Naive thymus-derived CD8-positive, alpha-beta T cell (primary cell): ENCODE measurements at regions of chr16 and their contacts with region 1.

Region 1: DNA sequence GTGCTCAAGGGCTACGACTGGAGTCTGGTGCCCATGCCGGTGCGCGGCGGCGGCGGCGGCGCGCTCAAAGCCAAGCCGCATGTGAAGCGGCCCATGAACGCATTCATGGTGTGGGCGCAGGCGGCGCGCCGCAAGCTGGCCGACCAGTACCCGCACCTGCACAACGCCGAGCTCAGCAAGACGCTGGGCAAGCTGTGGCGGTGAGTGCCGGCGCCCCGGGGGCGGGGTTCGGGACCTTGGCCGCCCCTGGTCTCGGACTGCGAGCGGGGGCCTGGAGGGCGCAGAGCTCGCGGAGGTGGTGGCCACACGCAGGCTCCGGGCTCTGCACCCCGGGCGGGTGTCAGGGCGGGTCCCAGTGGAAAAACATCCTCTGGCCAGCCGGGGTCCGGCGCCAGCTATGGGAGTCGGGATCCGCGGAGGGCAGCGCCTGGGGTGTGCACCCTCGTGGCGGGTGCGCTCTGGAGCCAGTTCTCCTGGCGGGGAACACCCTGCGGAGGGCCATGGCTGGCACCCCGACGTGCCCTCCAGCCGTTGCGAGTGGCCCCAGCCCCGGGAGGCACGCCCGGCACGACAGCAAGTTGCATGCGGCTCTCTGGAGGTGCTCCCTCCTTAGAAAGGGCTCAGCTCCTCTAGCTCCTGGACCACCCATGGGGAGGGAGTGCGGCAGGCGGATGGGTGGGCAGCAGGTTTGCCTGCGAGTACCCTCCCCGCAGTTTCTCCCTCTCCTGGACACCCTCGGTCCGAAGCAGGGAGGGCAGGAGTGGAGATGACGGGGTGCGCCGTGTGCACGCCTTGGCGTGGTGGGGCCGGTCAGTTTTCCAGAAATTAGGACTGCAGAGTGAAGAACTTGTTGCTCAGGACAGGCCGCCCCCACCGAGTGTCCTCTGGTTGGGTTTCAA is 824 bp downstream of the SOX8 start:
- DNase-seq: peak in 1 of 10 donors; percentile 34
- ATAC-seq: peak; percentile 40 to 45
- H3K4me3 Mint-ChIP-seq: peak overlapping the region; percentile 58 to 74 (median 68)
- H3K27ac Mint-ChIP-seq: peak overlapping the region in 1 of 10 donors; percentile 33
- H3K4me1 Mint-ChIP-seq: peaks cover 2 to 25% (median 14%) of the 10 kb centered on the region in 4 donors
- H3K27me3 Mint-ChIP-seq: peaks cover 0 to 6% (median 0%) of the 10 kb centered on the region in 5 donors

Region 2: GRCh38 chr16:970766-971581 is 11.4 kb before region 1 on chr16 and contains the start of gene LMF1:
- POLR2A ChIA-PET with region 1: interaction called, 30 read pairs
- DNase-seq: peak; percentile 88 to 100 (median 97)
- ATAC-seq: peak; percentile 90 to 92
- H3K4me3 Mint-ChIP-seq: peak within 1 kb of the TSS; percentile 68 to 89 (median 78)
- H3K27ac Mint-ChIP-seq: peak within 1 kb of the TSS in 9 of 10 donors; percentile 44 to 89 (median 75)
- H3K4me1 Mint-ChIP-seq: peaks cover 12 to 34% (median 18%) of the 10 kb centered on the region in 4 donors
- H3K27me3 Mint-ChIP-seq: no peaks in the 10 kb centered on the region
- polyA plus RNA-seq, gene LMF1: 12.2 to 13.6 (median 12.9) TPM

Region 3: GRCh38 chr16:1002399-1003161 is 20.2 kb after region 1 on chr16:
- POLR2A ChIA-PET with region 1: interaction called, 171 read pairs
- DNase-seq: peak in 1 of 10 donors; percentile 58
- ATAC-seq: peak in 1 of 2 donors; percentile 18
- H3K4me3 Mint-ChIP-seq: peak overlapping the region in 5 of 10 donors; percentile 36 to 66 (median 55)
- H3K27ac Mint-ChIP-seq: peak overlapping the region in 7 of 10 donors; percentile 22 to 88 (median 43)
- H3K4me1 Mint-ChIP-seq: peaks cover 28 to 63% (median 42%) of the 10 kb centered on the region in 4 donors
- H3K27me3 Mint-ChIP-seq: no peaks in the 10 kb centered on the region